Vagina (tissue), 2 donors: ENCODE measurements at regions of chr13 and their contacts with region 1.

Region 1: GRCh38 chr13:112267650-112268049 is 108.5 kb upstream of the SPACA7 start:
- DNase-seq: no peak
- H3K4me3 ChIP-seq: no peak overlapping the region
- H3K27ac ChIP-seq: no peak overlapping the region
- H3K4me1 ChIP-seq: no peaks in the 10 kb centered on the region
- H3K27me3 ChIP-seq: no peaks in the 10 kb centered on the region
- CTCF ChIP-seq: no peak
- POLR2A ChIP-seq: no peak

Region 2: DNA sequence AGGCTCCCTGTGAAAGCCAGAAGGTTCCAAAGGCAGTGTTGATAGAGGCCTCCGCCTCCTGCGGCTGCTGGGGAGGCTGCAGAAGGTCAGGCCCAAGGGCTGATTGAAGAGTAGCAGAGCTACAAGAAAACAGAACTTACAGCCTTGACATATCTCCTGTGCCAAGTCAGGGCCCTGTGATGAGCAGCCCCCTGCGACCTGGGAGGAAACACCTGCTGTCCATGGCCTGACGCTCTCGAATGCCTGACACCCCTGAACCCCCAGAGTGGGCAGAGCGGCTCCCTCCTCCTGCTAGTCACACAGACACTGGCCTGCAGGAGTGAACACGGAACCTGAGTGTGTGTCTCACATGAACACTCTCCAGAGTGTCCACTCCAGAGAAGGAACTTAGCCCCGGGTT is 358.5 kb after region 1 on chr13:
- intact Hi-C with region 1: loop called (anchors 5 kb)
- DNase-seq: no peak
- H3K4me3 ChIP-seq: no peak overlapping the region
- H3K27ac ChIP-seq: no peak overlapping the region
- H3K4me1 ChIP-seq: no peaks in the 10 kb centered on the region
- H3K27me3 ChIP-seq: no peaks in the 10 kb centered on the region
- CTCF ChIP-seq: no peak
- POLR2A ChIP-seq: no peak